Endothelial cell of umbilical vein (primary cell): ENCODE measurements at regions of chr5 and their contacts with region 1.

Region 1: DNA sequence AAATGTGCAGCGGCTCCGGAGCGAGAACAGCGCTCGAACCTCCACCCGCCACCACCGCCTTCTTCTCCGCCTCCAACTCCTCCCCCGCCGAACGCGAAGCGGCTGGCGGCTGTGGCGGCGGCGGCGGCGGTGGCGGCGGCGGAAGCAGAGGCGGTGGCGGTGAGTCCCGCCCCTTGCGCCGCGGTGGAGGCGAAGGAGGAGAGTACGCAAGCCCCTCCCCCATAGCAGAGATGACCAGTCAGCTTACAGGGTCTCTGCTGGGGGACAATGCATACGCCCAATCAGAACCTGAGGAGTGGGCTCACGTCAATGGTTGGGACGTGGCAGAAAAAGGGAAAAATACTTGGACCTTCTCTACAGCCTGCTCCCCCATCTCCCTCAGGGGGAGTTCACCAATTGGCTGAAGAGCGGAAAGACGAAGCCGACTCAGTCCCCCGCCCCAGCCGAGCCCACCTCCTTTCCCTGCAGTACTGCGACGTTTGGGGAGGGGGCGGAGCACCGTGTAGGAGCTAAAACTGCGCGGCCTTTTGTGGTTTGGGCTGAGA is at the start of gene PJA2:
- DNase-seq: peak; percentile 100
- H3K4me3 ChIP-seq: peak within 1 kb of the TSS; percentile 47 to 97 (median 88)
- H3K27ac ChIP-seq: peak within 1 kb of the TSS; percentile 97
- H3K4me1 ChIP-seq: peaks cover 18% of the 10 kb centered on the region
- H3K27me3 ChIP-seq: no peaks in the 10 kb centered on the region
- CTCF ChIP-seq: peak in 1 of 2 donors; percentile 22
- POLR2A ChIP-seq: peak; percentile 49
- total RNA-seq, gene PJA2: 61.8 and 64.9 TPM in 2 replicates

Region 2: GRCh38 chr5:108650997-108651396 is 758.9 kb before region 1 on chr5:
- CTCF ChIA-PET with region 1: no interaction called
- POLR2A ChIA-PET with region 1: no interaction called
- dilution Hi-C with region 1: no loop called
- intact Hi-C with region 1: loop called (anchors 1 kb)
- DNase-seq: peak; percentile 88
- H3K4me3 ChIP-seq: no peak overlapping the region
- H3K27ac ChIP-seq: peak overlapping the region; percentile 84
- H3K4me1 ChIP-seq: peaks cover 38% of the 10 kb centered on the region
- H3K27me3 ChIP-seq: no peaks in the 10 kb centered on the region
- CTCF ChIP-seq: no peak
- POLR2A ChIP-seq: no peak

Region 3: DNA sequence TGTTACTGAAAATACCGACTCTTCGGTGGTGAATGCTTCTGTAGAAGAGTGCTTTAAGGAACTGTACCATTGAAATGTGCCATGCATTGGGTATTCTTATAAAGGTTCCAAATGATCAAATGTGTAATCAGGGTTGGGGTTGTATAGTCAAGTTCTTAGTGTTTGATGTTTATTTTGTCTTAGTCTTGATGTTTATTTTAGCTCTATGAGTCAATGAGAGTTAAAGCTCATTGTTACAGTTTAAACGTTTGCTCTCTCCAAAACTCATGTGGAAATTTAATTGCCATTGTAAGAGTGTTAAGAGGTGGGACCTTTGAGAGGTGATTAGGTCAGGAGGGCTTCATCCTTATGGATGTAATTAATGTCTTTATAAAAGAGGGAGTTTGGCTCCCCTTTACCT is 509.2 kb before region 1 on chr5:
- CTCF ChIA-PET with region 1: no interaction called
- POLR2A ChIA-PET with region 1: no interaction called
- dilution Hi-C with region 1: no loop called
- intact Hi-C with region 1: loop called (anchors 2 kb)
- DNase-seq: peak; percentile 24
- H3K4me3 ChIP-seq: no peak overlapping the region
- H3K27ac ChIP-seq: no peak overlapping the region
- H3K4me1 ChIP-seq: peaks cover 21% of the 10 kb centered on the region
- H3K27me3 ChIP-seq: no peaks in the 10 kb centered on the region
- CTCF ChIP-seq: no peak
- POLR2A ChIP-seq: no peak

Region 4: GRCh38 chr5:109191153-109191558 is 218.8 kb before region 1 on chr5:
- CTCF ChIA-PET with region 1: no interaction called
- POLR2A ChIA-PET with region 1: no interaction called
- dilution Hi-C with region 1: no loop called
- intact Hi-C with region 1: loop called (anchors 10 kb)
- DNase-seq: peak; percentile 78
- H3K4me3 ChIP-seq: no peak overlapping the region
- H3K27ac ChIP-seq: peak overlapping the region; percentile 56
- H3K4me1 ChIP-seq: peaks cover 15% of the 10 kb centered on the region
- H3K27me3 ChIP-seq: no peaks in the 10 kb centered on the region
- CTCF ChIP-seq: no peak
- POLR2A ChIP-seq: no peak

Region 5: GRCh38 chr5:109439590-109439989 is 29.7 kb after region 1 on chr5:
- CTCF ChIA-PET with region 1: no interaction called
- POLR2A ChIA-PET with region 1: no interaction called
- dilution Hi-C with region 1: no loop called
- intact Hi-C with region 1: no loop called
- DNase-seq: no peak
- H3K4me3 ChIP-seq: no peak overlapping the region
- H3K27ac ChIP-seq: no peak overlapping the region
- H3K4me1 ChIP-seq: no peaks in the 10 kb centered on the region
- H3K27me3 ChIP-seq: no peaks in the 10 kb centered on the region
- CTCF ChIP-seq: no peak
- POLR2A ChIP-seq: no peak

Region 6: DNA sequence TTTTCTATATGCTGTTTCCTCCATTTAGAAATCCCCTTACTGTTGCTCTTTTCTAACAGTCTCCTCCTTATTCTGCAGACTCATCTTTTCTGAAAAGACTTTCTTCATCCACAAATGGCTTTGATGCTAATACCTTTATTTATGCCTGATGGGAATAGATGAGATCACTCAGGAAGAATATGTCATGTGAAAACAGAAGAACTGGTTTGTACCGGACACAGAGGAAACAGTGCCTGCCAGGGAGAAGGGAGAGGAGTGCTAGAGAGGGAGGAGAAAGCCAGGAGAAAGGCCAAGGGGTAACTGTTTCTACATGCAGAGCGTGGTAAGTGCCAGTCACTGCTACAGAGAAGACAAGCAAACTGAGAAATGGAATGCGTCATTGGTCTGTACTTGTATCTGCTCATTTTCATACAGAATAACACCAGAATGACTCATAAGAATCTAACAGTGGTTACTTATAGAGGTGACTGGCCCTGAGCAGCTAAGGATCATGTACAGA is 45.7 kb after region 1 on chr5:
- CTCF ChIA-PET with region 1: interaction called, 4 read pairs
- POLR2A ChIA-PET with region 1: no interaction called
- dilution Hi-C with region 1: no loop called
- intact Hi-C with region 1: loop called (anchors 1 kb)
- DNase-seq: peak; percentile 98
- H3K4me3 ChIP-seq: no peak overlapping the region
- H3K27ac ChIP-seq: peak overlapping the region; percentile 76
- H3K4me1 ChIP-seq: peaks cover 21% of the 10 kb centered on the region
- H3K27me3 ChIP-seq: no peaks in the 10 kb centered on the region
- CTCF ChIP-seq: no peak
- POLR2A ChIP-seq: no peak

Region 7: GRCh38 chr5:109865637-109866036 is 455.7 kb after region 1 on chr5:
- CTCF ChIA-PET with region 1: no interaction called
- POLR2A ChIA-PET with region 1: no interaction called
- dilution Hi-C with region 1: no loop called
- intact Hi-C with region 1: loop called (anchors 5 kb)
- DNase-seq: peak; percentile 96
- H3K4me3 ChIP-seq: no peak overlapping the region
- H3K27ac ChIP-seq: peak overlapping the region; percentile 79
- H3K4me1 ChIP-seq: peaks cover 29% of the 10 kb centered on the region
- H3K27me3 ChIP-seq: no peaks in the 10 kb centered on the region
- CTCF ChIP-seq: no peak
- POLR2A ChIP-seq: peak; percentile 38